ENCODE measurements at regions of chr4 and their contacts with region 1.

Region 1: GRCh38 chr4:22389240-22389870 is 126.5 kb downstream of the ADGRA3 start:
- DNase-seq: no peak
- ATAC-seq: peak; percentile 30
- H3K4me3 Mint-ChIP-seq: no peak overlapping the region
- H3K27ac Mint-ChIP-seq: no peak overlapping the region
- H3K4me1 Mint-ChIP-seq: no peaks in the 10 kb centered on the region
- H3K27me3 Mint-ChIP-seq: no peaks in the 10 kb centered on the region

Region 2: GRCh38 chr4:21790438-21791029 is 598.8 kb before region 1 on chr4:
- CTCF ChIA-PET with region 1: interaction called, 58 read pairs
- DNase-seq: no peak
- ATAC-seq: no peak
- H3K4me3 Mint-ChIP-seq: no peak overlapping the region
- H3K27ac Mint-ChIP-seq: no peak overlapping the region
- H3K4me1 Mint-ChIP-seq: no peaks in the 10 kb centered on the region
- H3K27me3 Mint-ChIP-seq: no peaks in the 10 kb centered on the region

Region 3: DNA sequence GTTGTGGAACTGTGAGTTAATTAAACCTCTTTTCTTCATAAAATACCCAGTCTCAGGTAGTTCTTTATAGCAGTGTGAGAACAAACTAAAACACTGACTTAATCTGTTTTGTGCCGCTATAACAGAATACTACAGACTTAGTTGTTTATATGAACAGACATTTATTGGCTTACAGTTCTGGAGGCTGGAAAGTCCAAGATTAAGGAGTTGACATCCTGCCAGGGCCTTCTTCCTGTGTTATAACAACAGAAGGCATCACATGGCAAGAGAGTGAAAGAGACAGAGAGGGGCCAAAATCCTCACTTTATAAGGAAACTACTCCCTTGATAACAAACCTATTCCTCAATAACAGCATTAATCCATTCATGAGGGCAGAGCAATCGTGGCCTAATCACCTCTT is 398.3 kb before region 1 on chr4:
- CTCF ChIA-PET with region 1: no interaction called
- DNase-seq: no peak
- ATAC-seq: no peak
- H3K4me3 Mint-ChIP-seq: no peak overlapping the region
- H3K27ac Mint-ChIP-seq: no peak overlapping the region
- H3K4me1 Mint-ChIP-seq: no peaks in the 10 kb centered on the region
- H3K27me3 Mint-ChIP-seq: no peaks in the 10 kb centered on the region

Measured in activated CD8-positive, alpha-beta memory T cell treated with anti-CD3 and anti-CD28 coated beads, Interleukin-2, amount 10 ng/mL, durations not matched to agents 7 days and 5 days (primary cell).